ENCODE measurements at regions of chr2 and their contacts with region 1.

Region 1: GRCh38 chr2:199911052-199911876 is at the start of gene C2orf69:
- DNase-seq: peak; percentile 96
- H3K4me3 ChIP-seq: peak within 1 kb of the TSS; percentile 89
- H3K27ac ChIP-seq: peak within 1 kb of the TSS; percentile 85
- H3K4me1 ChIP-seq: peaks cover 29% of the 10 kb centered on the region
- CTCF ChIP-seq: no peak
- total RNA-seq, gene C2orf69: 10.7 and 14.0 TPM in 2 replicates

Region 2: DNA sequence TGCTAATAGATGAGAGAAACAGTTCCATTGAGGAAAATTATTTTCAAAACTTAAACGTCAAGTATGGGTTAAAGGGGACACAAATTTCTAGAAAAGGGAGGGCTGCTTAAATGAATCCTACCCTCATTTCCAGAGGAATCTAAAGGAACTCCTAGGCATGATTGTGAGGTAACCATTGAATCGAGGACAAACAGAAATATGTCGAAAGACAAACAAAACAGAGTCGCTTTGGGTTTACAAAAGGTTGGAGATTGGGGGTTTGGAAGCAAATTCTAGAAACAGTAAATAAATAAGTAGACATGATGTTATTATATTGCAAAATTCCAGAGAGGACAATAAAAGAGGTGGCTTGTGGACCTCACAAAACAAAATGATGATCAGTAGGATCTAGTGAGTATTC is 233.4 kb before region 1 on chr2:
- CTCF ChIA-PET with region 1: no interaction called
- POLR2A ChIA-PET with region 1: no interaction called
- intact Hi-C with region 1: no loop called
- DNase-seq: no peak
- H3K4me3 ChIP-seq: no peak overlapping the region
- H3K27ac ChIP-seq: no peak overlapping the region
- H3K4me1 ChIP-seq: no peaks in the 10 kb centered on the region
- CTCF ChIP-seq: no peak

Region 3: DNA sequence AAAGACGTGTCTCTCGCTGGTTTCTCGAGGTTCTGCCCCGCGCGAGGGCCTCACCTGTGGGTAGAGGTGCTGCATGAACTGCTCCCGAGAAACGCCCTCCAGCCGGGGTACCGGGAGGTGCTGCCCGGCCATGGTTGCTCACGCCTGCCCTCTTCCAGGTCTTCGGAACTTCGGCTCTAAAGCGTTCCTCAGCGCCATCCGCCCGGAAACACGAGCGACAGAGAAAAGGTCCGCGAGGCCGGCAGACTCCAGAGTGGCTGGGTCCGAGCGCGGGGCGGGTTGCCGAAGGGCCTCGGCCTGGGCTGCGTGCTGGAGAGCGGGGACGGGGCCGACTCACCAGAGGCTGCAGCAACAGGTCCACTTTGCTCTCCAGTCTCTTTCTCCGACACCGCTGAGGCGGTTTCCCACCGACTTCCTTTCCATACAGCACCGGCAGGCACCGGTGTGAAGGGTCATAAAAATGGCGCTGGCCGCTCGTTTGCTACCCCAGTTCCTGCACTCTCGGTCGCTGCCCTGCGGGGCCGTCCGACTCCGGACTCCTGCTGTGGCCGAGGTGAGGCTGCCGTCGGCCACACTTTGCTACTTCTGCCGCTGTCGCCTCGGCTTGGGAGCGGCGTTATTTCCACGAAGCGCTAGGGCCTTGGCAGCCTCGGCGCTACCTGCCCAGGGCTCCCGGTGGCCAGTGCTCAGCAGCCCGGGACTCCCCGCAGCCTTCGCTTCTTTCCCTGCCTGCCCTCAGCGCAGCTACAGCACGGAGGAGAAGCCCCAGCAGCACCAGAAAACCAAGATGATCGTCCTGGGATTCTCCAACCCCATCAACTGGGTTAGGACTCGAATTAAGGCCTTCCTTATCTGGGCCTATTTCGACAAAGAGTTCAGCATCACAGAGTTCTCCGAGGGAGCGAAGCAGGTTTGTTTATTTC is 44.3 kb after region 1 on chr2 and contains the starts of genes MAIP1 and TYW5:
- CTCF ChIA-PET with region 1: no interaction called
- POLR2A ChIA-PET with region 1: interaction called, 4 read pairs
- intact Hi-C with region 1: loop called (anchors 2 kb)
- DNase-seq: peak; percentile 84
- H3K4me3 ChIP-seq: peak within 1 kb of the TSS; percentile 92
- H3K27ac ChIP-seq: peak within 1 kb of the TSS; percentile 57
- H3K4me1 ChIP-seq: peaks cover 29% of the 10 kb centered on the region
- CTCF ChIP-seq: peak; percentile 36; the same call in 1 of the 2 replicates
- total RNA-seq, gene MAIP1: 13.7 and 25.3 TPM in 2 replicates
- total RNA-seq, gene TYW5: 5.1 and 7.1 TPM in 2 replicates